ENCODE measurements at regions of chr9 and their contacts with region 1.

Region 1: GRCh38 chr9:87678650-87679515 is 47.0 kb upstream of the CTSL start:
- DNase-seq: peak in 8 of 10 donors; percentile 39 to 92 (median 73)

Region 2: DNA sequence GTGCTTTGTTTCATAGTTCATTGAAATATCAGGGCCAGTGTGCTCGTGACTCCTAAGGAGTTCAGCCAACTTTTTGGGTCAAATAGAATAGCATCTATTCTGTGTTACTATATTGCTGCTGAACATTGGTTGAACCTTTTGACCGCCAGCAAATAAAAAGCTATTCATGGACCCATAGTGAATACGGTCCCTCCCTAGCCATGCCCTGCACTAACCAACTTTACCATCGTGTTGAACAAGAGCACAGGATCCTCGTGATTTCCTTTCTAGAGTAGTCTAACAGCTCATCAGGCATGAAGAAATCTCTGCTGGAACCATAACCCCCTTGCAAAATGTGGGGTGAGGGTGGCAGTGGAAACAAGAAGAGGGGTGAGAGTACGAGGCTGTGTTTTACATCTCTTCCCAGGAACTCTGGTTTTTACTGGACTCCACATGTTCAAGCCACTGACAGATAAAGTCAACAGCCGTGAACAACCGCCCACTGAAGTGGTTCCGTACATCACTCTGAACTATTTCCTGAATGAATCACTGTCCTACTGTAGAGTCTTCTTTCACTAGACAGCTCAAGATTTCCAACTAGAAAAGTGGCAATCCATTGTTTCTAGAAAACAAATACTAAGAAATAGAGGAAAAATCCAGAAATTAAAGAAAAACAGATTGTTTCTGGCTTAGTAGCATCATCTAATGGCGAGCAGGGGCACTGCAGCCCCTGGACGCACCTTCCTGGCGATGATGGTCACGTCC is 133.7 kb after region 1 on chr9:
- intact Hi-C with region 1: loop called (anchors 1 kb)
- DNase-seq: peak in 2 of 10 donors; percentile 32 to 77

Region 3: DNA sequence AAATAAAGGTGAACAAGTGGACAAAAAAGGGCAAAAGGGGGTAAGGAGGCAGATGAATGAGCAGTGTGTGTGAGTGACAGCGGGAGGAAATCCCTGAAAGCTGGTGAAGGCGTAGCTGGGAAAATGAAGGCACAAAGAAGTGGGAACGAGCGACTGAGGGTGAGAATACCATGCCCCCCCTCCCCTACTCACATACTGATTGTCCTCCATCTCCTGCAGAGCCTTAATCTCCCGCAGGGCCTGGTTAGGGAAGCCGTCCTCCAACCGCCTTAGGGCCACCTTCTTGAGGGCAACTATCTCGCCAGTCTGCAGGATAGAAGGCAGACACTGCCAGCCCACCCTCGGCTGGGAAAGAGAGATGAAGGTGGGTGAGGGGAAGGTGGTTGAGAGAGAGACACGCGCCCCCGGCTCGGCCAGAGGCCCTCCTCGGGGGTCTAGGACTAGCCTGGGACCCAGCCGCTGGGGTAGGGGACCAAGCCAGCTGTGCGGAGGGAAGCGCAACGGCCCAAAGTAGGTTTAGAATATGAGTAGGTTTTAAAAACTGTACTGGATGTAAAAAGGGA is 294.9 kb after region 1 on chr9:
- intact Hi-C with region 1: loop called (anchors 5 kb)
- DNase-seq: peak in 1 of 10 donors; percentile 78

Measured in posterior cingulate gyrus (tissue), 11 donors.